Spleen (tissue), 13 donors: ENCODE measurements at regions of chr12 and their contacts with region 1.

Region 1: GRCh38 chr12:65602610-65603295 is 221.5 kb upstream of the HMGA2 start:
- DNase-seq: peak; percentile 78
- H3K4me3 ChIP-seq: peak overlapping the region in 1 of 8 donors; percentile 32
- H3K27ac ChIP-seq: peak overlapping the region in 1 of 8 donors; percentile 19
- H3K4me1 ChIP-seq: peaks cover 0 to 16% (median 0%) of the 10 kb centered on the region in 6 donors
- H3K27me3 ChIP-seq: peaks cover 0 to 12% (median 0%) of the 10 kb centered on the region in 7 donors
- CTCF ChIP-seq: peak in 8 of 11 experiments; percentile 33 to 67 (median 47)
- POLR2A ChIP-seq: no peak

Region 2: GRCh38 chr12:64946132-64946829 is 656.5 kb before region 1 on chr12:
- intact Hi-C with region 1: no loop called
- DNase-seq: no peak
- H3K4me3 ChIP-seq: no peak overlapping the region
- H3K27ac ChIP-seq: peak overlapping the region in 1 of 8 donors; percentile 22
- H3K4me1 ChIP-seq: no peaks in the 10 kb centered on the region
- H3K27me3 ChIP-seq: peaks cover 0 to 7% (median 0%) of the 10 kb centered on the region in 7 donors
- CTCF ChIP-seq: no peak
- POLR2A ChIP-seq: no peak

Region 3: GRCh38 chr12:65182012-65182739 is 420.6 kb before region 1 on chr12:
- intact Hi-C with region 1: no loop called
- DNase-seq: no peak
- H3K4me3 ChIP-seq: no peak overlapping the region
- H3K27ac ChIP-seq: no peak overlapping the region
- H3K4me1 ChIP-seq: peaks cover 9 to 100% (median 51%) of the 10 kb centered on the region in 6 donors
- H3K27me3 ChIP-seq: no peaks in the 10 kb centered on the region
- CTCF ChIP-seq: no peak
- POLR2A ChIP-seq: no peak

Region 4: DNA sequence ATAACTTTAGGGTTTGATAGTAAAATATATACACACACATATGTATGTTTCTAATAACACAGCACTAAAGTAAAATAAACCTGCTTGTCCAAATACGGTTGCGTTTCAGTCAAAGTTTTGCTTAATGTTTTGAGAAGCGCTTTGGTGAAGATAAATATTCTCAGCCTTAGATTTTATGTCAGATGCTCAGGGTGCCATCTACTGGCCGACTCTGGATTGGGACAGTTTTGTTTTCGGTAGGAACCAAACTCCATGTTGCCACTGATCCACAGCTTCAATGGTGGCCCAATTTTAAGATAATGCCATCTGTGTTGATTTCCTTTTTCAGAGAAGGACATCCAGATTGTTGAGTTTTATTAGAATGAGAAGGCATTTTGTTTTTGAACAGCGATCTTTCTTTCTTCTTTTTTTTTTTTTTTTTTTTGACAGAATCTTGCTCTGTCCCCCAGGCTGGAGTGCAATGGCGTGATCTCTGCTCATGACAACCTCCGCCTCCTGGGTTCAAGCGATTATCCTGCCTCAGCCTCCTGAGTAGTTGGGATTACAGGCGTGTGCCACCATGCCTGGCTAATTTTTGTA is 484.7 kb after region 1 on chr12:
- intact Hi-C with region 1: loop called (anchors 5 kb)
- DNase-seq: no peak
- H3K4me3 ChIP-seq: no peak overlapping the region
- H3K27ac ChIP-seq: no peak overlapping the region
- H3K4me1 ChIP-seq: peaks cover 0 to under 1% (median 0%) of the 10 kb centered on the region in 6 donors
- H3K27me3 ChIP-seq: peaks cover 0 to 7% (median 0%) of the 10 kb centered on the region in 7 donors
- CTCF ChIP-seq: peak in 10 of 11 experiments; percentile 24 to 77 (median 63)
- POLR2A ChIP-seq: no peak

Region 5: GRCh38 chr12:66321435-66321834 is 718.7 kb after region 1 on chr12:
- intact Hi-C with region 1: no loop called
- DNase-seq: no peak
- H3K4me3 ChIP-seq: no peak overlapping the region
- H3K27ac ChIP-seq: peak overlapping the region in 1 of 8 donors; percentile 17
- H3K4me1 ChIP-seq: peaks cover 0 to 9% (median 0%) of the 10 kb centered on the region in 6 donors
- H3K27me3 ChIP-seq: no peaks in the 10 kb centered on the region
- CTCF ChIP-seq: no peak
- POLR2A ChIP-seq: no peak